HCT116 (cell line): ENCODE measurements at regions of chr6 and their contacts with region 1.

Region 1: DNA sequence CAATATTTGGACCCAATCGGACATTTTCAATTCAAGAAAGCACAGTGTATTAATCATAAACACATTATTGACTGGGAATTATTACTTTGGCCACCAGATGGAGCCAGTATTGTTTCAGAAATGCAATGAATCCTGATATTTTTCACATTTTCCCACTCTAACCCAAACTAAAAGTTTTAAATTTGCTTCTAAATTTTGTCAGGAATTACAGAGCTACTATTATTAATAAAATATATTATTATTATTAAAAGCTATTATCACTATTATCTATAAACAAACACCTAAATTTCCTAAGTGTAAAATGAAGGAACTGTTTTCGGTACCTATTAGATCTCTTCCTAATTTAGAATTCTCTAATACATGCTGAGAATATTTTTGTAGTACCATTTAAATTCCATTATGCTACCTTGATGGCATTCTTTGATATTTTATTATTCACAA is 245.3 kb downstream of the OGFRL1 start:
- DNase-seq: peak; percentile 3
- ATAC-seq: no peak
- H3K4me3 ChIP-seq: no peak overlapping the region
- H3K27ac ChIP-seq: no peak overlapping the region
- H3K4me1 ChIP-seq: no peaks in the 10 kb centered on the region
- H3K27me3 ChIP-seq: no peaks in the 10 kb centered on the region; the same call in 1 of the 2 replicates
- CTCF ChIP-seq: peak in 2 of 3 experiments; percentile 41 to 44; a peak in 4 of 6 replicates
- POLR2A ChIP-seq: no peak
- RAD21 ChIP-seq: peak; percentile 44; the same call in 1 of the 2 replicates

Region 2: DNA sequence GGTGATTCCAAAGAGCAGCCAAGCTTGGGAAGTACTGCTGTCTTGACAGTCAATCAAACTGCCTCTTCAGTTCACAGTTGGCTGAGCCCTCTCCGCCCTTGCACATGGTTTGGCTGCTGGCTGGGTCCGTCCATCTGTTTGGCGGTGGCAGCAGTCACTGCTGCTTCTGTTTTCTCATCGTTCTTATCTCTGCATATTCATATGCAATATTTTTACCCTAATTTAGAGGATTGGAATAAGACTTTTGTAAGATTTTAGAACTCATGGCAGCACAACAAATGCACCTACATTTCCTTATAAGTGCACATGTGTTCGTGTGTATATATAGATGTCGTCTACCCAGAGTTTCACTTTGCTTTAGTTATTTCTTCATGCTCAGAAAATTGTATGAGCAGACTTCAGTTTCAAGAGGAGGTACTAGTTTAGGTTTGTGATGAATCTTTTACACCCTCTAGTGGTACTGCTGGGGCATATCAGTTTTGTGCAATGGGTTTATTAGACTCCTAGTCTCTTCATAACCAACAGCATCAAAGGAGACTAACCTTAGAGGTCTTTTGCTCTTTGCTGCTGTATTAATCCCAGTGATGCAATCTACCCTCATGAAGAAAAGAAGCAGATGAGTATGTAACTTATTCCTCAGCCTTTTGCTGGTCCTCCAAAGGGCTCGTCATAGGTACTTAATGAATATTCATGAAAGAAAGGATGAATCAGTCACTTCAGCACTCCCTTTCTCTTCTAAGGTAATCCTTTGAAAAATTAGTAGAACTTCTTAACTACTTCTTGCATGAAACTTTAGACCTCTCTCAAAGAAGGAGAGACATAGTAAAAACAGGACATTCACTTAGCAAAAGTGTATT is 1647.0 kb after region 1 on chr6:
- CTCF ChIA-PET with region 1: no interaction called
- POLR2A ChIA-PET with region 1: no interaction called
- RAD21 ChIA-PET with region 1: no interaction called
- intact Hi-C with region 1: loop called (anchors 5 kb)
- DNase-seq: peak; percentile 39
- ATAC-seq: peak; percentile 95
- H3K4me3 ChIP-seq: no peak overlapping the region
- H3K27ac ChIP-seq: no peak overlapping the region
- H3K4me1 ChIP-seq: no peaks in the 10 kb centered on the region
- H3K27me3 ChIP-seq: peaks cover 82% of the 10 kb centered on the region
- CTCF ChIP-seq: peak; percentile 63 to 88 (median 79)
- POLR2A ChIP-seq: no peak
- RAD21 ChIP-seq: peak; percentile 79